Activated B cell treated with CpG ODN at 0.5 μM for 24 hours (primary cell): ENCODE measurements at regions of chr17 and their contacts with region 1.

Region 1: DNA sequence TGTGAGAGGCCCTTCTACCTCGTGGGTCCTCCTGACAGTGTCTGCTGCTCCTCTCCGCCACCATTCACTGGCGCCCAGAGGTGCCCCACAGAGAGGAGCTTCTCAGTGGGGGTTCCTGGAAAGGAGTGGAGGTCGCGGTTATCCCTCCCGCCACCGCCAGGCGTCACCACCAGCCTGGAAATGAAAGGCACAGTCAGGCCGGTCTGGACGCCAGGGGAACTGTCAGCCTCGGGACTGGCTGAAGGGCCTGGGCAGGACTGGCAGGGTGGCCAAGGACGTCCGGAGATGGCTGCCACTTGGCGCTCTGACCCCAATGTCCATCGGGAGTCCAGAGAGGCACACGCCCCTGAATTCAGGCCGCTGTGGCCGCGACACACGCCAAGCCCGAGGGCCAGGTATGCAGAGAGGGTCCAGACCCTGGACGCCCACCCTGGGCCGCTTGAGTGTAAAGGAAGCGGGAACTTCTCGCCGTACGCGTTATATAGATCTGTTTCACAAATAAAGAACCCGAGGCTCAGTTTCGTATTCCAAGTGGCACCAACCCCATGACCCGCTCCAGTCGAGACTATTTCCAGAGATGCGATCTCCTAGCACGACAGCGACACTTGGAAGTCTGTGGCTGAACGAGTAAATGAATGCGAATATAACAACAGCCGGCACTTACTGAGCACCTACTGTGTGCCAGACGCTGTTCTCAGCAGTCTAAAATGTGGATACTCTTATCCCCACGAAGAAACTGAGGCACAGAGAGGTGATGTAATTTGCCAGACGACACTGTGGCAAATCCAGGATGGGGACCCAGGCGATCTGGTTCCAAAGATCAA is 7.6 kb upstream of the NXPH3 start:
- DNase-seq: peak; percentile 89
- ATAC-seq: peak; percentile 72
- H3K4me3 Mint-ChIP-seq: peak overlapping the region; percentile 67
- H3K27ac Mint-ChIP-seq: no peak overlapping the region
- H3K4me1 Mint-ChIP-seq: peaks cover 9% of the 10 kb centered on the region
- H3K27me3 Mint-ChIP-seq: peaks cover 29% of the 10 kb centered on the region
- CTCF ChIP-seq: peak; percentile 45

Region 2: DNA sequence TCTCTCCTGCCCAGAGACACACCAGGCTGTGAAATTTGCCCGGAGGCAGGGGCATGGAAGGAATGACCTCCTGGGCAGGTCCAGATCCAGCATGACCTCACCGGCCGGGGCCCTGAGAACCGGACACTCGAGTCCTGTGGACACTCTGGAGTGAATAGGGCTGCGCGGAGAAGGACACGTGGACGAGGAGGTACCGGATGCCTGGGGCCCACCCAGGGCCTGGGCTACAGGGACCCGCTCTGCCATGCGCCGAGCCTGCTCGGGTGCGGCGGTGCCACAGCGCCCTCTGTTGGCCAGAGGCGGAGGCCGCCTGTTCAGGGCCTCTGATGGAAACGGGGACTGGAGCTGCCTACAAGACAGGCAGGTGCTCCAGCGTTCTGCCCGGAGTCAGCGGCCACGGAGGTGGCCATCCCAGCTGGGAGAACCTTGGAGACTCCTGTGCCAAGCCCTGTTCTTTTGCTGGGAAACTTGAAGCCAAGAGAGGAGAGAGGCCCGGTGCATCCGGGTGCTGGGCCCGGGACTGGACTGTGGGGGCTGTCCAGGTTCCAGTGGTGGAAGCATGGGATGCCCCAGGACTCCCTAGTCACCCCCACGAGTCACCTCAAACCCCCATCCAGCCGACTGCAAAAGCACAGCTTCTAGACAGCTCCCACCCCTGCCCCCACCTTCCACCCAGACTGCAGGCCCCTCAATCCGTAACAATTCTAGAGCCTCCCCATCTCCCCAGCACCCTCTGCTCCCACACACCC is 11.7 kb before region 1 on chr17:
- CTCF ChIA-PET with region 1: interaction called, 11 read pairs
- POLR2A ChIA-PET with region 1: no interaction called
- intact Hi-C with region 1: no loop called
- DNase-seq: peak; percentile 86
- ATAC-seq: peak; percentile 98
- H3K4me3 Mint-ChIP-seq: no peak overlapping the region
- H3K27ac Mint-ChIP-seq: peak overlapping the region; percentile 35
- H3K4me1 Mint-ChIP-seq: no peaks in the 10 kb centered on the region
- H3K27me3 Mint-ChIP-seq: peaks cover 8% of the 10 kb centered on the region
- CTCF ChIP-seq: peak; percentile 40

Region 3: GRCh38 chr17:49694847-49695683 is 127.0 kb after region 1 on chr17:
- CTCF ChIA-PET with region 1: interaction called, 65 read pairs
- POLR2A ChIA-PET with region 1: interaction called, 5 read pairs
- intact Hi-C with region 1: loop called (anchors 1 kb)
- DNase-seq: peak; percentile 68
- ATAC-seq: peak; percentile 86
- H3K4me3 Mint-ChIP-seq: no peak overlapping the region
- H3K27ac Mint-ChIP-seq: no peak overlapping the region
- H3K4me1 Mint-ChIP-seq: peaks cover 18% of the 10 kb centered on the region
- H3K27me3 Mint-ChIP-seq: no peaks in the 10 kb centered on the region
- CTCF ChIP-seq: peak; percentile 44

Region 4: GRCh38 chr17:49788478-49789242 is 220.6 kb after region 1 on chr17 and contains the start of gene KAT7:
- CTCF ChIA-PET with region 1: interaction called, 4 read pairs
- POLR2A ChIA-PET with region 1: interaction called, 7 read pairs
- intact Hi-C with region 1: loop called (anchors 2 kb)
- DNase-seq: peak; percentile 90
- ATAC-seq: peak; percentile 86
- H3K4me3 Mint-ChIP-seq: peak within 1 kb of the TSS; percentile 94
- H3K27ac Mint-ChIP-seq: peak within 1 kb of the TSS; percentile 96
- H3K4me1 Mint-ChIP-seq: peaks cover 42% of the 10 kb centered on the region
- H3K27me3 Mint-ChIP-seq: no peaks in the 10 kb centered on the region
- CTCF ChIP-seq: no peak
- total RNA-seq, gene KAT7: 95.0 and 95.8 TPM in 2 replicates

Region 5: GRCh38 chr17:49997791-49998703 is 430.0 kb after region 1 on chr17:
- CTCF ChIA-PET with region 1: interaction called, 9 read pairs
- POLR2A ChIA-PET with region 1: interaction called, 3 read pairs
- intact Hi-C with region 1: loop called (anchors 1 kb)
- DNase-seq: peak; percentile 59
- ATAC-seq: peak; percentile 82
- H3K4me3 Mint-ChIP-seq: peak overlapping the region; percentile 19
- H3K27ac Mint-ChIP-seq: no peak overlapping the region
- H3K4me1 Mint-ChIP-seq: peaks cover 31% of the 10 kb centered on the region
- H3K27me3 Mint-ChIP-seq: peaks cover 64% of the 10 kb centered on the region
- CTCF ChIP-seq: peak; percentile 71